ENCODE measurements at regions of chr19 and their contacts with region 1.

Region 1: GRCh38 chr19:14381689-14382474 is 638 bp downstream of the ADGRE5 start:
- DNase-seq: peak; percentile 71
- H3K4me3 Mint-ChIP-seq: peak overlapping the region; percentile 81
- H3K27ac Mint-ChIP-seq: peak overlapping the region; percentile 84
- H3K4me1 Mint-ChIP-seq: peaks cover 28% of the 10 kb centered on the region
- H3K27me3 Mint-ChIP-seq: no peaks in the 10 kb centered on the region
- CTCF ChIP-seq: no peak

Region 2: GRCh38 chr19:14136509-14137281 is 245.2 kb before region 1 on chr19 and contains the start of gene ASF1B:
- CTCF ChIA-PET with region 1: interaction called, 11 read pairs
- intact Hi-C with region 1: no loop called
- DNase-seq: peak; percentile 95
- H3K4me3 Mint-ChIP-seq: peak within 1 kb of the TSS; percentile 85
- H3K27ac Mint-ChIP-seq: peak within 1 kb of the TSS; percentile 96
- H3K4me1 Mint-ChIP-seq: peaks cover 15% of the 10 kb centered on the region
- H3K27me3 Mint-ChIP-seq: no peaks in the 10 kb centered on the region
- CTCF ChIP-seq: peak; percentile 18
- total RNA-seq, gene ASF1B: 42.6 and 44.2 TPM in 2 replicates

Region 3: DNA sequence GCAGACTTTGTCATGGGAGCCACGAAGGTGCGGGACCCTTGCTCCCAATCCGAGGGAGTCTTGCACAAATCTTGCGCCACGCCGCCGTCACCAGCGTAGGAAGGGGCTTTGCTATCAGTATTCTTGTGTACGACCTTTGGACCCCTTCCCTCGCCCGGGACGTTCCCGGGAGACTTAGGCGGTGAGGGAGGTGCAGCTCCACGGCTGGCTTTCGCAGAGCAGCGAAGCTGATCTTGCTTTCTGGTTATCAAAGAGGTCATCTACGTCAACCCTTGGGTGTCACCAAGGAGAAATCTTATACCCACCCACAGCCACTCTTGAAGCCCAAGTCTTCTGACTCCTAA is 148.1 kb after region 1 on chr19:
- CTCF ChIA-PET with region 1: no interaction called
- intact Hi-C with region 1: no loop called
- DNase-seq: no peak
- H3K4me3 Mint-ChIP-seq: peak overlapping the region; percentile 100
- H3K27ac Mint-ChIP-seq: no peak overlapping the region
- H3K4me1 Mint-ChIP-seq: no peaks in the 10 kb centered on the region
- H3K27me3 Mint-ChIP-seq: no peaks in the 10 kb centered on the region
- CTCF ChIP-seq: no peak

Measured in Calu3 (cell line).